ENCODE measurements at regions of chr1 and their contacts with region 1.

Region 1: GRCh38 chr1:204806943-204807687 is 63.5 kb upstream of the NFASC start:
- DNase-seq: peak; percentile 82 to 98
- ATAC-seq: peak; percentile 92 to 97
- H3K4me3 ChIP-seq: peak overlapping the region; percentile 44
- H3K27ac ChIP-seq: peak overlapping the region; percentile 65 to 83
- H3K4me1 ChIP-seq: no peaks in the 10 kb centered on the region
- CTCF ChIP-seq: peak; percentile 100
- EP300 ChIP-seq: no peak
- POLR2A ChIP-seq: no peak
- RAD21 ChIP-seq: peak; percentile 89 to 99

Region 2: DNA sequence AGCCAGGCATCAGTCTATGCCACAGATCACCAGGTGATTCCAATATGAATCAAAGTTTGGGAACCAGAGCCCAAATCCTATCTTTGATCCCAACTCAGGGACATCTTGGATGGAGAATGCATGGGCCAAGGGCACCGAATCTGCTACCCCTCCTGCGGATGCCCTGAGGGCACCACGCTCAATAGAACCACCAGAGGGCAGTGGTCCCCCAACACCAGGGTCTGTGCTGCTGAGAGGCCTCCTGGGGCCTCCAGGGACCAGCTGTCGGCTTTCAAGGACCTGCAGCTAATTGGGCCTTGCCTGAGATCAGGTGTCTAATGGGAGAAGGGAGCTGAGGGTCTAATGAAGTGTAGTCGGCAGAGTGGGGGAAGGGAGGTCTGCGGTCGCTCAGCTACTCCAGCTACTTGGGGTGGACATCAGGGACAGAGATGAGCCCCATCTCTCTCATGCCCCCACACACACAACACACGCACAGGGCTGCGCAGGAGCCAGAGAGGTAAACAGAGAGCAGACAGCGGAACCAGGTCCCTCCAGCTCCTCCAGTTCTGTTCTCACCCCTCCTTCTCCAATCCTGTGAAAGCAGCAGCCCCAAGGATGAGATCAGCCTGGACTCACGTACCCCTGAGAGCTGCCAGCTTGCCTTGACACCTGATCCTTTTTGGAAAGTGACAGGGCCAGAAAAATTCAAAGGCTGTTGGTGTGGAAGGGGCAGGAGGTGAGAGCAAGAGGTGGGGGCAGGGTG is 360.6 kb before region 1 on chr1:
- CTCF ChIA-PET with region 1: interaction called, 10 read pairs
- POLR2A ChIA-PET with region 1: no interaction called
- DNase-seq: peak; percentile 59 to 81
- ATAC-seq: peak; percentile 86 to 88
- H3K4me3 ChIP-seq: no peak overlapping the region
- H3K27ac ChIP-seq: no peak overlapping the region
- H3K4me1 ChIP-seq: peaks cover 41% of the 10 kb centered on the region
- CTCF ChIP-seq: peak; percentile 57
- EP300 ChIP-seq: no peak
- POLR2A ChIP-seq: no peak
- RAD21 ChIP-seq: peak; percentile 66 to 71

Region 3: DNA sequence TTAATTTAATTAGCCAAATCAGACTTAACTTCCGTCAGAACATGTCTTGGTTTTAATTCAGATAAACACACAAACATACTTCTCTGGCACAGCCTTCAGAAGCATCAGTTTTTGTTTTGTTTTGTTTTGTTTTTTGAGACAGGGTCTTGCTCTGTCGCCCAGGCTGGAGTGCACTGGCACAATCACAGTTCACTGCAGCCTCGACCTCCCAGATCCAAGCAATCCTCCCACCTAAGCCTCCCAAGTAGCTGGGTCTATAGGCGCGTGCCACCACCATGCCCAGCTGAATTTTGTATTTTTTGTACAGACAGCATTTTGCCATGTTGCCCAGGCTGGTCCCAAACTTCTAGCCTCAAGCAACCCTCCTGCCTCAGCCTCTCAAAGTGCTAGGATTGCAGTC is 256.2 kb before region 1 on chr1:
- CTCF ChIA-PET with region 1: interaction called, 591 read pairs
- POLR2A ChIA-PET with region 1: no interaction called
- DNase-seq: no peak
- ATAC-seq: no peak
- H3K4me3 ChIP-seq: no peak overlapping the region
- H3K27ac ChIP-seq: no peak overlapping the region
- H3K4me1 ChIP-seq: no peaks in the 10 kb centered on the region
- CTCF ChIP-seq: no peak
- EP300 ChIP-seq: no peak
- POLR2A ChIP-seq: no peak
- RAD21 ChIP-seq: no peak

Region 4: DNA sequence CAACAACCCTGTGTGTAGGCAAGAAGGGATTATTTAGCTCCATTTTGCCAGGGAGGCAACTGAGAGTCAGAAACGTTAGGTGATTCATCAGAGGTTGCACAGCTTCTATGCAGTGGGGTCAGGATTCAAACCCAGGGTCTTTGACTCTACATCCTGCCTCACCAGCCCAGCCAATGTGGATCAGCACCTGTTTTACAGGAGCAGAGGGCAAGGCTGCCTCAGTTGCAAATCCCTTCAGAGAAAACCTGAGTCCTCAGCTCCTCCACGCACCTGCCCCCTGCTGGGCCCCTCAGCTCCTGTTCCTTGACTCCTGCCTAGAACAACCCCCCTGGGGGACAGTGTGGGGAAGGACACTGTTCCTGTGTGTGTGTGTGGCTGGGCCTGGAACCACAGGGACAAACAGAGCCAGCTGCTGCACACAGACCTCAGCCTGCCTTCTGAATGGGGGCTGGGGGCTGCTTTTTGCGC is 183.2 kb before region 1 on chr1:
- CTCF ChIA-PET with region 1: interaction called, 20 read pairs
- POLR2A ChIA-PET with region 1: no interaction called
- DNase-seq: peak; percentile 48 to 53
- ATAC-seq: peak; percentile 86 to 87
- H3K4me3 ChIP-seq: no peak overlapping the region
- H3K27ac ChIP-seq: peak overlapping the region in 1 of 2 experiments; percentile 42; a peak in 2 of 6 replicates
- H3K4me1 ChIP-seq: peaks cover 50% of the 10 kb centered on the region
- CTCF ChIP-seq: no peak
- EP300 ChIP-seq: no peak
- POLR2A ChIP-seq: no peak
- RAD21 ChIP-seq: peak in 1 of 2 experiments; percentile 12; a peak in 1 of 5 replicates

Region 5: DNA sequence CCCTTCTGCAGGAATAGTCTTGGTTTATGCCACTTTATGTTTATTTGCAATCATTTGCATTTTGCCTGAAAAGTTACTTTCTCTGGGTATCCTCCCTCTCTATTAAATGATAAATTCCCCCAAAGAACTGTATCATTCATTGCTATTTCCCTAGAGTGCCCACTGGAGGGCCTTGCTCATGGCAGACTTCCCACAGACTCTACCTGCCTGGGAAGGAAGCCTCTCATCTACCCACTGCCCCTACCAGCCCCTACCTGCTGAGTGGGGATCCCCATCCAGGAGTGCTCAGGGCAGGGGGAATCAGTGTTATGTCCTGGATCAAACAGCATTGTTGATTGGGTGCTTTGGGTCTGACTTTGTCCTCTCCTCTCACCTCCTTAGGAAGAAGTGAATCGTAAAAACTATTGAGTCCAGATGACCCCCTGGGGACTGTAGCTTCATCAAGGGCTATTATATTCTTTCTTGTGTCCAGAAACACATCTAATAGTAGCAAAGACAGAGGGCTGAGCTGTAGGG is 114.7 kb before region 1 on chr1:
- CTCF ChIA-PET with region 1: interaction called, 18 read pairs
- POLR2A ChIA-PET with region 1: no interaction called
- DNase-seq: peak in 1 of 2 experiments; percentile 27
- ATAC-seq: peak; percentile 60 to 79; a peak in 3 of 6 replicates
- H3K4me3 ChIP-seq: no peak overlapping the region
- H3K27ac ChIP-seq: no peak overlapping the region
- H3K4me1 ChIP-seq: peaks cover 11% of the 10 kb centered on the region
- CTCF ChIP-seq: peak; percentile 26; the same call in 1 of the 3 replicates
- EP300 ChIP-seq: no peak
- POLR2A ChIP-seq: no peak
- RAD21 ChIP-seq: peak; percentile 29 to 44; a peak in 4 of 5 replicates

Region 6: DNA sequence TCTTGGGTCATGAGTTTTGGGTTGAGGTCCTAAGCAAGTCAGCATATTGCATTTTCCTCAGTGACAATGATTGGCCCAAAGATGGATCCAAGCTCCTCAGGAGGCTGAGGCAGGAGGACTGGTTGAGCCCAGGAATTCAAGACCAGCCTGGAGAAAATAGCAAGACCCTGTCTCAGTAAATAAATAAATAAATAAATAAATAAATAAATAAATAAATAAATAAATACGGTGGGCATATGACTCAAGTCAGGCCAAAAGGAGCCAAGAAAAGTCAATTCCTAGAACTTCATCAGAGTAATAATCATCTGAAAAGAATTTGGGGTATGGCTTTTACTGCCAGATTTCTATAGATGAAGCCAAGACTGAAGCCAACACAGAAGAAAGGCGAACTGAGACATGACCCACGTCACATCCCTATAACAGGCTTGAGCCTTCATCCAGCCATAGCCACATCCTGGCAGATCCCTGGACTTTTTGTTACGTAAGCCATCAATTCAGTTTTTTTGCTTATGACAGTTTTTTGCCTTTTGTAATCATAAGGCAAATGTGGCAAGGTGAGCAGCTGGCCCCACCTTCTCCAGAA is 24.9 kb before region 1 on chr1:
- CTCF ChIA-PET with region 1: interaction called, 199 read pairs
- POLR2A ChIA-PET with region 1: no interaction called
- DNase-seq: no peak
- ATAC-seq: no peak
- H3K4me3 ChIP-seq: no peak overlapping the region
- H3K27ac ChIP-seq: no peak overlapping the region
- H3K4me1 ChIP-seq: no peaks in the 10 kb centered on the region
- CTCF ChIP-seq: no peak
- EP300 ChIP-seq: no peak
- POLR2A ChIP-seq: no peak
- RAD21 ChIP-seq: no peak

Region 7: GRCh38 chr1:204917802-204918201 is 110.7 kb after region 1 on chr1:
- CTCF ChIA-PET with region 1: no interaction called
- POLR2A ChIA-PET with region 1: no interaction called
- DNase-seq: no peak
- ATAC-seq: no peak
- H3K4me3 ChIP-seq: no peak overlapping the region
- H3K27ac ChIP-seq: no peak overlapping the region
- H3K4me1 ChIP-seq: no peaks in the 10 kb centered on the region
- CTCF ChIP-seq: no peak
- EP300 ChIP-seq: no peak
- POLR2A ChIP-seq: no peak
- RAD21 ChIP-seq: no peak

Region 8: DNA sequence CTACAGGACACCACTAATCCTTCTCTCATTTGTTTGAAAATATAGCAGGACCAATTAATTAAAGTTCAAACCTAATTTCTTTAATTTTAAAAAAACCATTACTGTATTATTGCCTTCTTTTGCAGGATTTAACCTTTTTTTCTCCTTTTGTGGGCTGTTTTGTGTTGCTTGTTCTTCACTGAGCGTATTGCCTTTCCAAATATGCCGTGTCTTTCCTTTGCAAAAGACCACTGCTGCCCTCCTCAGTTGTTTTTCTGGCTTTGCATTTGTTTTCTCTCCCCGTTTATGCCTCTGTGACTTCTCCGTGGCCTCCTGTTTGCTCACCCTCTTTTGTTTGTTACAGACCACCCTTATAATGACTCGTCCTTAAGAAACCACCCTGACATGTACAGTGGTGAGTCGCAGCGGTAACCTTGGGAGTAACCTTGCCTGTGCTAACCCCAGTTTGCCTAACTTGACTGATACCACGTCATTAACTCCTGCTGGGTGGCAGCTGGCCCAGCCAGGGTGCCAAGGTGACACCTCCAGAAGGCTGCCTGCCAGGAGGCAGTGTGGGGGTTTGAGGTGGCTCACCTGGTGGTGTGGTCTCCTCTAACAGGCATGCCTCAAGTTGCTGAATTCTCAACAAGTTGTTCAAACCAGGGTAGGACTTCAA is 154.8 kb after region 1 on chr1:
- CTCF ChIA-PET with region 1: interaction called, 22 read pairs
- POLR2A ChIA-PET with region 1: no interaction called
- DNase-seq: no peak
- ATAC-seq: no peak
- H3K4me3 ChIP-seq: no peak overlapping the region
- H3K27ac ChIP-seq: no peak overlapping the region
- H3K4me1 ChIP-seq: no peaks in the 10 kb centered on the region
- CTCF ChIP-seq: no peak
- EP300 ChIP-seq: no peak
- POLR2A ChIP-seq: no peak
- RAD21 ChIP-seq: peak in 1 of 2 experiments; percentile 17; a peak in 1 of 5 replicates

Region 9: GRCh38 chr1:205144751-205145150 is 337.6 kb after region 1 on chr1:
- CTCF ChIA-PET with region 1: no interaction called
- POLR2A ChIA-PET with region 1: no interaction called
- DNase-seq: no peak
- ATAC-seq: 0 out of 6 replicates have a peak, but pooled peaks of 1 of the 2 experiments have one; percentile 10
- H3K4me3 ChIP-seq: no peak overlapping the region
- H3K27ac ChIP-seq: peak overlapping the region in 1 of 2 experiments; percentile 50; a peak in 2 of 6 replicates
- H3K4me1 ChIP-seq: peaks cover 25% of the 10 kb centered on the region
- CTCF ChIP-seq: no peak
- EP300 ChIP-seq: no peak
- POLR2A ChIP-seq: no peak
- RAD21 ChIP-seq: no peak

Region 10: DNA sequence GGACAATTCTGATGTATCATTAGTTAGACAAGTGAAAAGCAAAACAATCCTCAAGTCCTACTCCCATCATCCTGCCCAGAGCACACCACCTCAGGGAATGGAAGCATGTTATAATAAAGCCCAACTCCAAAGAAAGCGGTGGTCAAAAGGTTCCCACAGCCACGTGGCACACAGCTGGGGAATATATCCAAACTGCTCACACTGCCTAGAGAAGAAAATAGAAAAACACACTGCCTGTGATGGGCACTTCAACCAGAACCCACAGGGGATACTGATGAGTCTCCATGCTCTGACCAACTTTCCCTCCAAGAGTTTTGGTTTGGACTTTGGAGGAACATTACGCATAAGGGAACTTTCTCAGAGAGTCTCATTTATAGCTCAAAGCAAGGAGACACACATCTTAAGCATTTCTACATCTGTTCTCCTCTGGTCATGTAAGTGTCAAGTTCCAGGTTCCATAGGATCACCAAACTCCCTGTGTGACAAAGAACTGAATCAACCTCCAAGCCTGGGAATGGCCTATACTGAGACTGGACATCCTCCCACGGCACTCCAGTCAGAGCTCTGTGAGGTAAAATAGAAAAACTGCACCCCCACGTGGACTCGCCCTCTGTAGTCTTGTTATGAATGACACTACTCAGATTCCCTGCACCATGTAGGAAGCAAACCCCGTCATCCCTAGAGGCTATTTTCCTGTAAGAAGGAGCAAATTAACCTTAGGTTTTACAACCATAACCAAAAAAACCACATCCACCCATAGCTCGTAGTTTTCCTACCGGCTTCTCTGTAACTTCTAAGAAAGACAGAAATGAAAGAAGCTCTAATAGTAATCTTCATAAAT is 392.2 kb after region 1 on chr1:
- CTCF ChIA-PET with region 1: no interaction called
- POLR2A ChIA-PET with region 1: no interaction called
- DNase-seq: no peak
- ATAC-seq: peak in 1 of 2 experiments; percentile 42; a peak in 2 of 6 replicates
- H3K4me3 ChIP-seq: no peak overlapping the region
- H3K27ac ChIP-seq: no peak overlapping the region
- H3K4me1 ChIP-seq: peaks cover 3% of the 10 kb centered on the region; the same call in 2 of the 3 replicates
- CTCF ChIP-seq: no peak
- EP300 ChIP-seq: no peak
- POLR2A ChIP-seq: no peak
- RAD21 ChIP-seq: no peak

Region 11: GRCh38 chr1:205313563-205314308 is 506.6 kb after region 1 on chr1:
- CTCF ChIA-PET with region 1: no interaction called
- POLR2A ChIA-PET with region 1: no interaction called
- DNase-seq: peak in 1 of 2 experiments; percentile 76
- ATAC-seq: peak; percentile 25 to 62; a peak in 4 of 6 replicates
- H3K4me3 ChIP-seq: peak overlapping the region; percentile 95
- H3K27ac ChIP-seq: peak overlapping the region; percentile 96 to 99
- H3K4me1 ChIP-seq: peaks cover 95% of the 10 kb centered on the region
- CTCF ChIP-seq: no peak
- EP300 ChIP-seq: no peak
- POLR2A ChIP-seq: no peak
- RAD21 ChIP-seq: no peak